ENCODE measurements at regions of chr4 and their contacts with region 1.

Region 1: GRCh38 chr4:8428293-8429097 is 12.0 kb downstream of the ACOX3 start:
- DNase-seq: peak; percentile 99
- H3K4me3 Mint-ChIP-seq: peak overlapping the region; percentile 97
- H3K27ac Mint-ChIP-seq: peak overlapping the region; percentile 92
- H3K4me1 Mint-ChIP-seq: peaks cover 18% of the 10 kb centered on the region
- H3K27me3 Mint-ChIP-seq: no peaks in the 10 kb centered on the region

Region 2: GRCh38 chr4:8158710-8159536 is 269.6 kb before region 1 on chr4 and contains the start of gene ABLIM2:
- intact Hi-C with region 1: loop called (anchors 1 kb)
- DNase-seq: peak; percentile 100
- H3K4me3 Mint-ChIP-seq: peak within 1 kb of the TSS; percentile 97
- H3K27ac Mint-ChIP-seq: peak within 1 kb of the TSS; percentile 82
- H3K4me1 Mint-ChIP-seq: peaks cover 9% of the 10 kb centered on the region
- H3K27me3 Mint-ChIP-seq: peaks cover 27% of the 10 kb centered on the region
- total RNA-seq, gene ABLIM2: 0.28 and 0.63 TPM in 2 replicates

Measured in activated CD4-positive, alpha-beta T cell treated with anti-CD3 and anti-CD28 coated beads, Interleukin-2, amount 10 ng/mL, durations not matched to agents 24 days and 14 days (primary cell).